WTC11 (cell line): ENCODE measurements at regions of chr22 and their contacts with region 1.

Region 1: GRCh38 chr22:40009292-40009769 is 14.6 kb downstream of the FAM83F start:
- DNase-seq: peak; percentile 63
- ATAC-seq: peak; percentile 79
- H3K4me3 Mint-ChIP-seq: peak overlapping the region; percentile 29
- H3K27ac Mint-ChIP-seq: peak overlapping the region; percentile 70; the same call in 1 of the 2 replicates
- H3K4me1 Mint-ChIP-seq: peaks cover 57% of the 10 kb centered on the region
- H3K27me3 Mint-ChIP-seq: no peaks in the 10 kb centered on the region
- CTCF ChIP-seq: no peak

Region 2: DNA sequence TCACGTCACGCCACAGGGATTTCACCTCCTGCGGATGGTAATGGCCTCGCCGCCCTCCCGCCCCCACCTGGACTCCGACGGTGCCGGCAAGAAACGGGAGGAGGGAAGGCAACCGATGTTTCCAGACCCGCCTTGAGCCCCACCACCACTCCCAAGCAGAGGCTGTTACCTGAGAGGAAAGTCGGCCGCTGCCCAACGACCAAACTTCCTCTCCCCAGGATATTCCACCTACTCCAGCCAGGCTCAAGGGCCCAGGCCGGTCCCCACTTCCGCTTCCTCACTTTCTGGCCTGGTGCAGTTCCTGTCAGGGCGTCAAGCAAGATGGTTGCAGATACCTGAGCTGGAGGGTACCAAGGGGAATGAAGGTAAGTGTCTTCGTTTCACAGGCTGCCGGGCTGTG is 115.8 kb before region 1 on chr22 and contains the start of gene ENTHD1:
- CTCF ChIA-PET with region 1: no interaction called
- POLR2A ChIA-PET with region 1: no interaction called
- DNase-seq: peak; percentile 24
- ATAC-seq: peak; percentile 59
- H3K4me3 Mint-ChIP-seq: no peak within 1 kb of the TSS
- H3K27ac Mint-ChIP-seq: no peak within 1 kb of the TSS
- H3K4me1 Mint-ChIP-seq: peaks cover 7% of the 10 kb centered on the region
- H3K27me3 Mint-ChIP-seq: peaks cover 4% of the 10 kb centered on the region; the same call in 1 of the 2 replicates
- CTCF ChIP-seq: no peak
- total RNA-seq, gene ENTHD1: not detected in 3 replicates

Region 3: DNA sequence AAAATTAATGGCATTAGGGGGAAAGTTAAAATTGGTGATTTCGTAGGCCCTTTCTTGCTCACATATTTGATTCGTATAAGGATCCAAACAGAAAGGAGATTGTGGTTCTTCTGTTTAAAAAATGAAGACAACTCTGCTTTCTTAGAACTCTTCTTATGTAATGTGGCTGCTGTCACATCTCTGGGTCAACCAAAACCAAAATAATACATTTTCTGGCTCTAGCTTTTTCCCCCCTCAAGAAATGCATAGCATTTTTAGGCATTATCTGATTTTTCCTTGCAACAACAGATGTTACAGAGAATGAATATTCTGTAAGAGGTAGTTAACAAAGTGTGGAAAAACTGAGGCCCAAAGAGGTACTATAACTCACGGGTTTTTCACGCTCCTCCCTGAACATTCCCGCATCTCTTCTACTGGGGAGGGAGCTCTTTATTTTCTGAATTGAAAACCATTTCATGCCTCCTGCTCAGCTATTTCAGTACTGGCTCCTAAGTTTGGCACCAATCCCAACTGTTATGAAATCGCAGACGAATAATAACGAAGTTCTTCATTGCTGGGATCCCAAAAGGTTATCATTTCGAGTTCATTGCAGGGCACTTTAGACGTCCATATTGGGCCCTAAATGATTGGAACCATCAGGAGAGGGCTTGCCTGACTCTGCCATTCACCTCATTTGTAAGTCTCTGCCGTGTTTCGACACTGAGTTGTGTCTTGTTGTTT is 91.4 kb before region 1 on chr22:
- CTCF ChIA-PET with region 1: no interaction called
- POLR2A ChIA-PET with region 1: no interaction called
- DNase-seq: no peak
- ATAC-seq: no peak
- H3K4me3 Mint-ChIP-seq: no peak overlapping the region
- H3K27ac Mint-ChIP-seq: no peak overlapping the region
- H3K4me1 Mint-ChIP-seq: peaks cover 14% of the 10 kb centered on the region
- H3K27me3 Mint-ChIP-seq: no peaks in the 10 kb centered on the region; the same call in 1 of the 2 replicates
- CTCF ChIP-seq: no peak

Region 4: GRCh38 chr22:39952347-39952746 is 57.0 kb before region 1 on chr22:
- CTCF ChIA-PET with region 1: interaction called, 20 read pairs
- POLR2A ChIA-PET with region 1: no interaction called
- DNase-seq: no peak
- ATAC-seq: no peak
- H3K4me3 Mint-ChIP-seq: no peak overlapping the region
- H3K27ac Mint-ChIP-seq: no peak overlapping the region
- H3K4me1 Mint-ChIP-seq: peaks cover 23% of the 10 kb centered on the region
- H3K27me3 Mint-ChIP-seq: peaks cover 6% of the 10 kb centered on the region; the same call in 1 of the 2 replicates
- CTCF ChIP-seq: no peak

Region 5: DNA sequence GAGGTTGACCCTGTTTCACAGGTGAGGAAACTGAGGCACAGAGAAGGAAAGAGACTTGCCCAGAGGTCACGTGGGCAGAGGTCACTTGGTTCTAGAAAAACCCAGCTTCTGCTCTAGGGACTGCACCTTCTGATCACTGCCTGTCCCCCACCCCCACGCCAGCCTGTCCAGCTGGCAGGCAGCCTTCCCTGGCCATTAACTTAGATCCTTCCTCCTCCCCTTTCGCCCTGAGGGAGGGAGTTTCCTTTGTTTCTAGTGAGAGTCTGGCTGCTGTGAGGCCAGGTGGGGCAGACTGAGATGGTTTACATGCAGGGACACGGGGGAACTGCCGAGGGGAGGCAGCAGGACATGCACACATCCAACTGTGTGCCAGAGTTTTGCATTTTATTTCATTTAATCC is 11.4 kb before region 1 on chr22:
- CTCF ChIA-PET with region 1: interaction called, 10 read pairs
- POLR2A ChIA-PET with region 1: interaction called, 5 read pairs
- DNase-seq: peak; percentile 62
- ATAC-seq: peak; percentile 31
- H3K4me3 Mint-ChIP-seq: peak overlapping the region; percentile 64
- H3K27ac Mint-ChIP-seq: peak overlapping the region; percentile 100
- H3K4me1 Mint-ChIP-seq: peaks cover 79% of the 10 kb centered on the region
- H3K27me3 Mint-ChIP-seq: peaks cover 8% of the 10 kb centered on the region
- CTCF ChIP-seq: no peak

Region 6: DNA sequence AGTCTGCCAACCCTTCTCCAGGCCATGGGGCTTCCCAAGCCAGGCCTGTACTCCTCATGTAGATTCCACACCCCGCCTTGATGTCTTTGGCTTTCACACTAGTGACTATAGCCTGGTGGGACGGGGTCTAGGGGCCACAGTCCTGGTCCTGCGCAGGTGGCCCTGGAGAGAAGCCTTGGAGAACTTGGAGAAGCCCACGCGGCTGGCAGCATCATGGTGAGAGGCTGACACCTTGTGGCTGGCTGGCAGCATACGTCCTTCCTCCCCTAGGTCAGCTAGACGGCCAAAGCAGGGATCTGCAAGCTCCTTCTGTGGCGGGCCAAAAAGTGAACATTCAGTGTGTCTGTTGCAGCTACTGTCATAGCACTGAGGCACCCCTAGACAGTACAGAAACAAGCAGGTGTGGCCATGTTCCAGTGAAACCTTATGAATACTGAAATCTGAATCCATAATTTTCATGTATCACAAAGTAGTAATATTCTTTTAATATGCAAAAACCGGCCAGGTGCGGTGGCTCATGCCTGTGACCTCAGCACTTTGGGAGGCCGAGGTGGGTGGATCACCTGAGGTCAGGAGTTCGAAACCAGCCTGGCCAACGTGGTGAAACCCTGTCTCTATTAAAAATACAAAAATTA is 27.4 kb after region 1 on chr22:
- CTCF ChIA-PET with region 1: interaction called, 14 read pairs
- POLR2A ChIA-PET with region 1: no interaction called
- DNase-seq: peak; percentile 77
- ATAC-seq: peak; percentile 90
- H3K4me3 Mint-ChIP-seq: no peak overlapping the region
- H3K27ac Mint-ChIP-seq: no peak overlapping the region
- H3K4me1 Mint-ChIP-seq: no peaks in the 10 kb centered on the region
- H3K27me3 Mint-ChIP-seq: peaks cover 14% of the 10 kb centered on the region
- CTCF ChIP-seq: peak; percentile 57

Region 7: GRCh38 chr22:40094485-40094884 is 85.2 kb after region 1 on chr22:
- CTCF ChIA-PET with region 1: no interaction called
- POLR2A ChIA-PET with region 1: no interaction called
- DNase-seq: no peak
- ATAC-seq: no peak
- H3K4me3 Mint-ChIP-seq: no peak overlapping the region
- H3K27ac Mint-ChIP-seq: no peak overlapping the region
- H3K4me1 Mint-ChIP-seq: no peaks in the 10 kb centered on the region
- H3K27me3 Mint-ChIP-seq: no peaks in the 10 kb centered on the region
- CTCF ChIP-seq: no peak